ENCODE measurements at regions of chr9 and their contacts with region 1.

Region 1: DNA sequence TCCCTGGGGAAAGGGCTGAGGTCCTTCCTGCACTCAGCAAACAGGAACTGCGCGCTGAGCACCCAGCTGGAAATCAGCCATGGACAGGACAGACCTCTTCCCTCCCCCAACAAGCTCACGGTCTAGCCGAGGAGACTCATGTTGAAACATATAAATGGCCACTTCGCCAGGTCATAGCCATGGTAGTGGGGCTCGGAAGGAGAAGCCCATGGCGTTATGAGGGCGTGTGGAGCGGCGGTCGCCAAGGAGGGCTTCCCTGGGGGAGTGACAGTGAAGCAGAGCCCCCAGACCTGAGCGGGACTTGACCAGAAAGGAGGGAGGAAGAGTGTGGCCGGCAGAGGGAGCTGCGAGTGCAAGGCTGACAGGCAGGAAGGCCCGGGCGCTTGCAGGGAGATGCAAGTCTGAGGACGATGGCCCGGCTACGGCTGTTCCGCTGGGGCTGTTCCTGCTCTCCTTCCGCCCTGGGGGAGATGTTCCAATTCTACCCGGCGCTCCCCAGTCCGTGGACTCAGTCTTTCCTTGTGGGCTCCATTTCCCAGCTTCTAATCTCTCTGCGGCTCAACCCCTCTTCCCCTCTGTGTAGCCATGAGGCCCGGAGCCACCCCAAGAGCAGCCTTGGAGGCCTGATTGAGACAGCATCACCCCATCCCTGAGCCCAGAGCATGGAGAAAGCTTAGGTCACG is 43.9 kb upstream of the PRRC2B start:
- DNase-seq: peak; percentile 93
- ATAC-seq: peak; percentile 99
- H3K4me3 Mint-ChIP-seq: peak overlapping the region; percentile 30
- H3K27ac Mint-ChIP-seq: peak overlapping the region; percentile 54
- H3K4me1 Mint-ChIP-seq: peaks cover 14% of the 10 kb centered on the region
- H3K27me3 Mint-ChIP-seq: no peaks in the 10 kb centered on the region

Region 2: GRCh38 chr9:131140112-131140511 is 209.9 kb before region 1 on chr9:
- CTCF ChIA-PET with region 1: no interaction called
- POLR2A ChIA-PET with region 1: no interaction called
- DNase-seq: no peak
- ATAC-seq: no peak
- H3K4me3 Mint-ChIP-seq: no peak overlapping the region
- H3K27ac Mint-ChIP-seq: no peak overlapping the region
- H3K4me1 Mint-ChIP-seq: no peaks in the 10 kb centered on the region
- H3K27me3 Mint-ChIP-seq: no peaks in the 10 kb centered on the region

Region 3: DNA sequence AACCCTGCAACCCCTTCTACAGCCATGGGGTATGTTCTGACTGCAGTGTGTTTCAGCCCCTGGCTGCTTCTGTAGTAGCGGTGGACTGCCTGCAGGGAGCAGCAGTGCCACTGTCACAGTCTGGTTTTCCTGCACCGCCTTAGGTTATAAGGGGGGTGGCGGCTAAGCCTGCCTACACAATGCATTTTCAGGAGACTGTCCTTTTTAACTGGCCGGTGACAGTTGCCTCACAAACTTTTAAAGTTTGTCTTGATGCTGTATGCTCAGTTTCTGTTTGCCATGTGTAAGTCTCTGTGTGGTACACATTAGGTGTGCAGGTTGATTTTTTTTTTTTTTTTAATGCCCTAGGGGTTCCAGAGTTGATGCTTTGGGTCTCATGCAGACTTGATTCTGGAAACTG is 171.6 kb before region 1 on chr9:
- CTCF ChIA-PET with region 1: interaction called, 14 read pairs
- POLR2A ChIA-PET with region 1: no interaction called
- DNase-seq: peak; percentile 86
- ATAC-seq: peak; percentile 99
- H3K4me3 Mint-ChIP-seq: no peak overlapping the region
- H3K27ac Mint-ChIP-seq: peak overlapping the region; percentile 48
- H3K4me1 Mint-ChIP-seq: peaks cover 11% of the 10 kb centered on the region
- H3K27me3 Mint-ChIP-seq: no peaks in the 10 kb centered on the region

Region 4: GRCh38 chr9:131361202-131361833 is 11.3 kb after region 1 on chr9:
- CTCF ChIA-PET with region 1: interaction called, 15 read pairs
- POLR2A ChIA-PET with region 1: no interaction called
- DNase-seq: peak; percentile 50
- ATAC-seq: peak; percentile 39
- H3K4me3 Mint-ChIP-seq: no peak overlapping the region
- H3K27ac Mint-ChIP-seq: peak overlapping the region; percentile 65
- H3K4me1 Mint-ChIP-seq: peaks cover 24% of the 10 kb centered on the region
- H3K27me3 Mint-ChIP-seq: no peaks in the 10 kb centered on the region

Region 5: DNA sequence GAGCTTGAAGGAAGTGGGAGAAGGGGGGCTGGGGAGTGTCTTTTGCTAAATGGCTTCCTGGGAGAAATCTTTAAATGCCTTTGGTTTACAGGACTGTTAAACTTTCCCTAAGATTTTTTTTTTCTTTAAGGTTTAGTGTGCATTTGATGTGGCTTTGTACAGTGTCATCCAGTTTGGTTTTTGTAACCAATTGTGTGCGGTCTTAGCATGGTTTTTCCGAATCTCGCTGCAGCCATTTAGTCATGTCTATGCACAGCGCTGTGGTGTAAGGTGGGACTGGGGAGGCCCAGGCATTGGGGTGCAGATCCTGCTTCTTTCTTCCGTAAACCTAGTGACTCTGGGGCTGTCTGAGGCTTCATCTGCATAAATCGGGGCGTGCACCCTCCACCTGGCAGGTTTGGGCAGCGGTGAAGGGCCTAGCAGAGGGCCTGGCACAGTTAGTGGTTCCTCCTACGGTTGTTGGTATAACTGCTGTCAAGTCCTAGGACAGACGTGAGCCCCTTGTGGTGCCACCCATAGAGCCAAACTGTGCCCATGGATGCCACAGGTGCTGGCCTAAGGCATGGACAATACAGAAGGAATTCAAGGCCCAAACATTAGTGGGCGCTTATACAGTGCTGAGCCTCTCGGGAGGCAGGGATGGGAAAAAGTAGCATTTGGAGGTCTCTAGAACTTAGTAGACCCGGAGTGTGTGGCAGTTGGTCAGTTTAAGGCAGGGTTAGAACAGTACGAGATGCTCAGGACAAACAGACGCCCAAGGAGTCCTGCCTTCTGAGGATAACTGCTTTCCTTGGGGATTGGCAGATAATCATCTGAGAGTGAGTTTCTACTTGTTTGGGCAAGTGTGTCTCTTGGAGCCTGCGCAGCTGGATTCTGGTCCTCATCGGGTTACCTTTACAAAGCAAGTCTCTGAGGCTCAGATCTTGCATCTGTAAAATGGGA is 45.4 kb after region 1 on chr9:
- CTCF ChIA-PET with region 1: interaction called, 12 read pairs
- POLR2A ChIA-PET with region 1: no interaction called
- DNase-seq: peak; percentile 87
- ATAC-seq: peak; percentile 67
- H3K4me3 Mint-ChIP-seq: peak overlapping the region; percentile 97
- H3K27ac Mint-ChIP-seq: peak overlapping the region; percentile 84
- H3K4me1 Mint-ChIP-seq: peaks cover 66% of the 10 kb centered on the region
- H3K27me3 Mint-ChIP-seq: peaks cover 5% of the 10 kb centered on the region

Region 6: GRCh38 chr9:131418143-131419028 is 68.4 kb after region 1 on chr9:
- CTCF ChIA-PET with region 1: interaction called, 23 read pairs
- POLR2A ChIA-PET with region 1: no interaction called
- DNase-seq: no peak
- ATAC-seq: no peak
- H3K4me3 Mint-ChIP-seq: peak overlapping the region; percentile 66
- H3K27ac Mint-ChIP-seq: peak overlapping the region; percentile 86
- H3K4me1 Mint-ChIP-seq: peaks cover 92% of the 10 kb centered on the region
- H3K27me3 Mint-ChIP-seq: no peaks in the 10 kb centered on the region

Region 7: GRCh38 chr9:131500939-131501541 is 151.0 kb after region 1 on chr9:
- CTCF ChIA-PET with region 1: interaction called, 13 read pairs
- POLR2A ChIA-PET with region 1: interaction called, 5 read pairs
- DNase-seq: peak; percentile 77
- ATAC-seq: peak; percentile 55
- H3K4me3 Mint-ChIP-seq: peak overlapping the region; percentile 94
- H3K27ac Mint-ChIP-seq: peak overlapping the region; percentile 91
- H3K4me1 Mint-ChIP-seq: peaks cover 64% of the 10 kb centered on the region
- H3K27me3 Mint-ChIP-seq: no peaks in the 10 kb centered on the region